ENCODE measurements at regions of chr13 and their contacts with region 1.

Region 1: DNA sequence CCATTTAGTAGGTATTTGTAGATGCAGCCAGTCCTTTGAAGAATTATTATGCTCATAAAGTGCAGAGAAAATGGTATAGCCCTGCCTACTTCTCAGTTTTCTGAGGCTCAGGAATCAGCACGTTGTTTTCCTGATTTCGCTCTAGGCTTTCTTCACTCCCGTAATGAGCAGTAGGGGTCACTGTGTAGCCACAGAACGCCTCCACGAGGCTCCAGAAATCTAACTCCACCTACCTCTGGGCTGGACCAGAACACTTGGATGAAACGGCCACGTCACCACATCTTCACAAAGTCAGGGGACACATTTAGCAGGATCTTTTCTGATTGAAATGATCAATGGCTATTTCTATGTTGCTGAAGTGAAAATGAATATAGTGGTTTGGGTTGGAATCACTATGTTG is 49.8 kb upstream of the GTF3A start:
- DNase-seq: peak; percentile 72
- H3K4me3 Mint-ChIP-seq: no peak overlapping the region
- H3K27ac Mint-ChIP-seq: no peak overlapping the region
- H3K4me1 Mint-ChIP-seq: peaks cover 2% of the 10 kb centered on the region
- H3K27me3 Mint-ChIP-seq: peaks cover 18% of the 10 kb centered on the region

Region 2: GRCh38 chr13:27339299-27339698 is 35.4 kb before region 1 on chr13:
- CTCF ChIA-PET with region 1: no interaction called
- intact Hi-C with region 1: no loop called
- DNase-seq: peak; percentile 65
- H3K4me3 Mint-ChIP-seq: no peak overlapping the region
- H3K27ac Mint-ChIP-seq: no peak overlapping the region
- H3K4me1 Mint-ChIP-seq: peaks cover 2% of the 10 kb centered on the region
- H3K27me3 Mint-ChIP-seq: no peaks in the 10 kb centered on the region

Region 3: DNA sequence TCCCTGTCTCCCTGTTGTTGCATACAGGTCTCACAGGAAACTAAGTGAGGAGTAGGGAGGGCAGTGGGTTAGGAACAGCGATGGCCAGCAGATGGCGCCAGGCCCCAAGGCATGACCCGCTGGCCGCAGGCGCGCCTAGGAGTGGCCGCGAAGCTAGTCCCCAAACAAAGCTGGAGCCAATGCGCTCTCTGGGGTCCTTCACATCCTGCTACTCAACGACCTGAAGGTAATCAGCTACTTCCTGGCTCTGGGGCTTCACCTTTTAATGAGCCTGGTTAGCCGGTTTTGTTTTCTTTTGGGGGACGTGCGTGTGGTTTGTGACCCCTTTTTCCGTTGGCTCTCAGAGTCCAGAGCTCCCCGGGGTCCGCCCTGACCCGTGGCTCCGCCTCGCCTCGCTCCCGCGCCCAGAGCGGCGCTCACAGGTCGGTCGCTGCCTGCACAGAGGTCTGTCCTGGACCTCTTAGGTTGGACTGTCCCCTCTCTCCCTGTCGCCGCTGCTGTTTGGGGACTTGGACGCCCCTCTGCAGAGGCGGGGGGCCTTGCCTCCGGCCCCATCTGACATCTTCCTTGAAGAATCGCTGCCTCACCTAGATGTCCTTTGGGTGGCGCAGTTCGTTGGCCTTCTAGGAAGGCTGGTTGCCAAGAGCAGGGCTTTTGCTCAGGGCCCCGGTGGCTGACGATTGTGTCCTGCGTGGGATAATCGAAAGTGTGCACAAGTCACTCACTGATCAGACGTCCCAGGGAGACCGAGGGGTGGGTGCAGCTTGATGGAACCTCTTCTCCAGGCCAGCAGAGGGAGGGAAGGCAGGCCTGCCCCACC is 12.4 kb before region 1 on chr13:
- CTCF ChIA-PET with region 1: interaction called, 53 read pairs
- intact Hi-C with region 1: no loop called
- DNase-seq: peak; percentile 85
- H3K4me3 Mint-ChIP-seq: no peak overlapping the region
- H3K27ac Mint-ChIP-seq: no peak overlapping the region
- H3K4me1 Mint-ChIP-seq: no peaks in the 10 kb centered on the region
- H3K27me3 Mint-ChIP-seq: peaks cover 18% of the 10 kb centered on the region

Region 4: GRCh38 chr13:27533155-27533643 is 158.5 kb after region 1 on chr13:
- CTCF ChIA-PET with region 1: no interaction called
- intact Hi-C with region 1: loop called (anchors 2 kb)
- DNase-seq: peak; percentile 61
- H3K4me3 Mint-ChIP-seq: no peak overlapping the region
- H3K27ac Mint-ChIP-seq: no peak overlapping the region
- H3K4me1 Mint-ChIP-seq: peaks cover 8% of the 10 kb centered on the region
- H3K27me3 Mint-ChIP-seq: peaks cover 2% of the 10 kb centered on the region

Region 5: GRCh38 chr13:27712421-27712820 is 337.8 kb after region 1 on chr13:
- CTCF ChIA-PET with region 1: no interaction called
- intact Hi-C with region 1: loop called (anchors 10 kb)
- DNase-seq: peak; percentile 18
- H3K4me3 Mint-ChIP-seq: no peak overlapping the region
- H3K27ac Mint-ChIP-seq: no peak overlapping the region
- H3K4me1 Mint-ChIP-seq: no peaks in the 10 kb centered on the region
- H3K27me3 Mint-ChIP-seq: peaks cover 3% of the 10 kb centered on the region

Region 6: GRCh38 chr13:27744801-27745200 is 370.2 kb after region 1 on chr13:
- CTCF ChIA-PET with region 1: no interaction called
- intact Hi-C with region 1: no loop called
- DNase-seq: no peak
- H3K4me3 Mint-ChIP-seq: no peak overlapping the region
- H3K27ac Mint-ChIP-seq: no peak overlapping the region
- H3K4me1 Mint-ChIP-seq: no peaks in the 10 kb centered on the region
- H3K27me3 Mint-ChIP-seq: peaks cover 8% of the 10 kb centered on the region

Region 7: GRCh38 chr13:27770809-27771208 is 396.2 kb after region 1 on chr13:
- CTCF ChIA-PET with region 1: no interaction called
- intact Hi-C with region 1: loop called (anchors 5 kb)
- DNase-seq: peak; percentile 55
- H3K4me3 Mint-ChIP-seq: no peak overlapping the region
- H3K27ac Mint-ChIP-seq: no peak overlapping the region
- H3K4me1 Mint-ChIP-seq: no peaks in the 10 kb centered on the region
- H3K27me3 Mint-ChIP-seq: peaks cover 28% of the 10 kb centered on the region

Region 8: GRCh38 chr13:27953676-27954405 is 579.2 kb after region 1 on chr13:
- CTCF ChIA-PET with region 1: interaction called, 5 read pairs
- intact Hi-C with region 1: loop called (anchors 5 kb)
- DNase-seq: peak; percentile 71
- H3K4me3 Mint-ChIP-seq: peak overlapping the region; percentile 69
- H3K27ac Mint-ChIP-seq: no peak overlapping the region
- H3K4me1 Mint-ChIP-seq: peaks cover 8% of the 10 kb centered on the region
- H3K27me3 Mint-ChIP-seq: peaks cover 60% of the 10 kb centered on the region